ENCODE measurements at regions of chr6 and their contacts with region 1.

Region 1: DNA sequence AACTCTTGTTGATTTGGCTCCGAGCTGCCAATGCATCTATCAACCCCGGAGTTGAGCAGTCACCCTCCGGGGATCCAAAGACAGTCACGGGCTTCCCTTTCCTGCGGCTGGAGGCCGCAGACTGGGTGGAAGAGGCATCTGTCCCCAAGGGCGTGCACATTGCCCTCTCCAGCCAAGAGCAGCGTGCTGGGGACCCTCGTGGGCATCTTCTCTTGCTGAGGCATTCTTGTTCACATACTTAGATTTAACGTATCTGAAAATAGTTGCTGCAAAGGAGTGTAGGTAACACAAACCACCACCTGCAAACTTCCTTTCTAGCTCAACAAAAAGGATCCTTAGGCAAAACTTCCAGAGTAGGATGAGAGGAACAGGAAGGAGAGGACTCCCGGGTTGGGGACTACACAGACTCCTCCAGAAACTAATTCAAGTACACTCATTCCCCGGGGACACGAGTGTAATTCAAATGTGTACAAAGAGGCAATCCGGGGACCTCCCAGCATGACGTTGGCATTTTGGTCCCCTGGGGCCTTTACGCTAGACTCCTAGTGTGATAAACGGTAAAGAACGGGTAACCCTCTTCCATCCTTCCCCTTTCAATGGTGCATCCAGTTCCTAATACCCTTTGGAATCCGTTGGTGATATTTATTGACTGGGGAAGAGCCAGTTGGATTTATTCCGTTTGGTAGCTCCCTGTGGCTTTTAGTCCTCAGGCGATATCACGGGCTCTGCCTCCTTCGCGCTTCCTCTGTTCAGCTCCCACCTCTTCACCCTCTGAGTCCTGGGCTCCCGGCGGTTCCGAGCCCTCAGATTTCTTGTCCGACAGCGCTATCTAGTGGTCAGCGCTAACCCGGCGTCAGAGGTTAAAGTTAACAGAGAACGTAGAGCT is 2.7 kb upstream of the COL12A1 start:
- DNase-seq: peak; percentile 80
- H3K4me3 ChIP-seq: no peak overlapping the region
- H3K27ac ChIP-seq: no peak overlapping the region
- H3K4me1 ChIP-seq: peaks cover 31% of the 10 kb centered on the region
- H3K27me3 ChIP-seq: peaks cover 17% of the 10 kb centered on the region in 2 experiments
- CTCF ChIP-seq: peak; percentile 78 to 92
- POLR2A ChIP-seq: no peak

Region 2: GRCh38 chr6:73653571-73654424 is 1554.7 kb before region 1 on chr6 and contains the start of gene SLC17A5:
- CTCF ChIA-PET with region 1: interaction called, 20 read pairs
- POLR2A ChIA-PET with region 1: no interaction called
- dilution Hi-C with region 1: no loop called
- intact Hi-C with region 1: no loop called
- DNase-seq: peak; percentile 95
- H3K4me3 ChIP-seq: peak within 1 kb of the TSS; percentile 58 to 92 (median 84)
- H3K27ac ChIP-seq: peak within 1 kb of the TSS; percentile 61
- H3K4me1 ChIP-seq: peaks cover 14% of the 10 kb centered on the region
- H3K27me3 ChIP-seq: no peaks in the 10 kb centered on the region
- CTCF ChIP-seq: no peak
- POLR2A ChIP-seq: peak; percentile 90
- total RNA-seq, gene SLC17A5: 15.2 and 17.6 TPM in 2 replicates

Region 3: GRCh38 chr6:73803562-73804241 is 1404.8 kb before region 1 on chr6:
- CTCF ChIA-PET with region 1: interaction called, 11 read pairs
- POLR2A ChIA-PET with region 1: no interaction called
- dilution Hi-C with region 1: no loop called
- intact Hi-C with region 1: loop called (anchors 2 kb)
- DNase-seq: peak; percentile 72
- H3K4me3 ChIP-seq: no peak overlapping the region
- H3K27ac ChIP-seq: peak overlapping the region; percentile 81
- H3K4me1 ChIP-seq: peaks cover 18% of the 10 kb centered on the region
- H3K27me3 ChIP-seq: no peaks in the 10 kb centered on the region
- CTCF ChIP-seq: peak; percentile 57 to 64
- POLR2A ChIP-seq: no peak

Region 4: DNA sequence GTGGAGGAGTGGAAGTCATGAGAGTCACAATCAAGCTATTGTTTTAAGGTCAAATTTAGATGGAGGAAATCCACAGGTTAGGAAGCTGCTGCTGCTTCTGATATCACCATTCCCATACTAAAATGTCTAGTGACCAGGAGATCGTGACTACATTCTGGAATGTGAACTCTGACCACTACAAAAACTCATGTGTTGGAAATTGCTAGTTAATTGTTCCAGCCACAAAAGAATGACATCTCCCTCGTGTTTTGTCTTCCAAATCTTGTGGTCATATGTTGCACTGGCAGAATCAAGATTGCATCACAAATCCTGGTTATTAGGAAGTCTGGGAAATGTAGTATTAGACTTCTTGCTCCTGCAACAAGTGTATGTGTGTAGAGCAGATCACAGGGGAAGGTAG is 1070.6 kb before region 1 on chr6:
- CTCF ChIA-PET with region 1: interaction called, 6 read pairs
- POLR2A ChIA-PET with region 1: no interaction called
- dilution Hi-C with region 1: no loop called
- intact Hi-C with region 1: loop called (anchors 2 kb)
- DNase-seq: peak; percentile 98
- H3K4me3 ChIP-seq: no peak overlapping the region
- H3K27ac ChIP-seq: peak overlapping the region; percentile 72
- H3K4me1 ChIP-seq: peaks cover 26% of the 10 kb centered on the region
- H3K27me3 ChIP-seq: no peaks in the 10 kb centered on the region
- CTCF ChIP-seq: no peak
- POLR2A ChIP-seq: no peak

Region 5: GRCh38 chr6:74574794-74575193 is 633.7 kb before region 1 on chr6:
- CTCF ChIA-PET with region 1: interaction called, 10 read pairs
- POLR2A ChIA-PET with region 1: no interaction called
- dilution Hi-C with region 1: no loop called
- intact Hi-C with region 1: loop called (anchors 2 kb)
- DNase-seq: peak; percentile 50
- H3K4me3 ChIP-seq: no peak overlapping the region
- H3K27ac ChIP-seq: no peak overlapping the region
- H3K4me1 ChIP-seq: peaks cover 4% of the 10 kb centered on the region
- H3K27me3 ChIP-seq: no peaks in the 10 kb centered on the region
- CTCF ChIP-seq: peak; percentile 39 to 56
- POLR2A ChIP-seq: no peak

Region 6: GRCh38 chr6:74899416-74899815 is 309.1 kb before region 1 on chr6:
- CTCF ChIA-PET with region 1: interaction called, 184 read pairs
- POLR2A ChIA-PET with region 1: no interaction called
- dilution Hi-C with region 1: no loop called
- intact Hi-C with region 1: loop called (anchors 1 kb)
- DNase-seq: peak; percentile 52
- H3K4me3 ChIP-seq: no peak overlapping the region
- H3K27ac ChIP-seq: no peak overlapping the region
- H3K4me1 ChIP-seq: no peaks in the 10 kb centered on the region
- H3K27me3 ChIP-seq: no peaks in the 10 kb centered on the region
- CTCF ChIP-seq: peak in 1 of 2 donors; percentile 19
- POLR2A ChIP-seq: no peak

Region 7: GRCh38 chr6:75098709-75099108 is 109.8 kb before region 1 on chr6:
- CTCF ChIA-PET with region 1: interaction called, 5 read pairs
- POLR2A ChIA-PET with region 1: no interaction called
- dilution Hi-C with region 1: no loop called
- intact Hi-C with region 1: loop called (anchors 2 kb)
- DNase-seq: peak; percentile 95
- H3K4me3 ChIP-seq: no peak overlapping the region
- H3K27ac ChIP-seq: no peak overlapping the region
- H3K4me1 ChIP-seq: peaks cover 31% of the 10 kb centered on the region
- H3K27me3 ChIP-seq: no peaks in the 10 kb centered on the region
- CTCF ChIP-seq: no peak
- POLR2A ChIP-seq: no peak

Region 8: GRCh38 chr6:75284632-75285286 is 76.2 kb after region 1 on chr6 and contains the start of gene TMEM30A:
- CTCF ChIA-PET with region 1: no interaction called
- POLR2A ChIA-PET with region 1: no interaction called
- dilution Hi-C with region 1: no loop called
- intact Hi-C with region 1: no loop called
- DNase-seq: peak; percentile 99
- H3K4me3 ChIP-seq: peak within 1 kb of the TSS; percentile 91 to 95 (median 94)
- H3K27ac ChIP-seq: peak within 1 kb of the TSS; percentile 84
- H3K4me1 ChIP-seq: peaks cover 27% of the 10 kb centered on the region
- H3K27me3 ChIP-seq: no peaks in the 10 kb centered on the region
- CTCF ChIP-seq: no peak
- POLR2A ChIP-seq: peak; percentile 95
- total RNA-seq, gene TMEM30A: 197 and 213 TPM in 2 replicates

Region 9: DNA sequence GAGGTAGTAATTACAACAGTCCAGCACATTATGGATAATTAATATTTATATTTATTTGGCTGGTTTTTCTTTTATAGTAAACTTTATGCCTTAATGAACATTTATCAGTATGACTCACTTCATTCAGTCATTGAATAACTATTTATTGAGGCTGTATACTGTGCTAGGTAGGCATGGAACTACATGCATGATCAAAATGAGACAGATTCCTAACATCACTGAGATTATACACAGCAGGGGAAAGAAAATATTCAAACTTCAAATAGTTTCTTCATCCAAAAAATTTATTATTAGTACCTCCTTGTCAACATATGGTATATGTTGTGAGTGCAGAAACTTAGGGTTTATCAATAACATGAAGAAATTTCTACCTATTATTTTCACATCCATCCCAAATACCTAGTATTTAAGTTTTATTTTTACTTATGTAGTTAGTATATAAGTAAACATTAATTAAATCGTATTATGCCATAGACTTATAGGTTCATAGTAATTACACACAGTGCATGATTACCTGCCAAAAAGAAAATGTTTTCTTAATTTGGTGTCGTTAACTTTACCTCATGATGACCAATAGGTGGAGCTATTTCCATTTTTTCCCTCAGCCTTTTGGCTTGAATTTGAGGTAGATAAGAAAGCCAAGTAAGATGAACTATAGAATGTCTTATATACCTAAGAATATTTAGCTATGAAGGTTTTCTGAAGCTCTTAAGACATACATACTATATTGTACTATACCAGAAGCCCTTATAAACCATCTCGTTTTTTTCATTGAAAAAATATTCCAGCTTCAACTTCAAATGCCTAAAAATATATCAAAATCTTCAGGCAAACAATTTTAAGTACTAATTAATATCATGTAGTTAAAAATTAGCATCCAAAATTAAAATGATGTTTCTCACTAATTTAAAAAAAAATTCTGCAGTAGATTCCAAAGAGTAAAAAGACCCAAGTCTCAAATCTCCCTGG is 88.6 kb after region 1 on chr6:
- CTCF ChIA-PET with region 1: no interaction called
- POLR2A ChIA-PET with region 1: no interaction called
- dilution Hi-C with region 1: no loop called
- intact Hi-C with region 1: no loop called
- DNase-seq: peak; percentile 85
- H3K4me3 ChIP-seq: no peak overlapping the region
- H3K27ac ChIP-seq: no peak overlapping the region
- H3K4me1 ChIP-seq: no peaks in the 10 kb centered on the region
- H3K27me3 ChIP-seq: no peaks in the 10 kb centered on the region
- CTCF ChIP-seq: peak; percentile 25 to 35
- POLR2A ChIP-seq: no peak